Posterior vena cava (tissue), 2 donors: ENCODE measurements at regions of chr15 and their contacts with region 1.

Region 1: GRCh38 chr15:90648137-90649070 is 68.7 kb upstream of the BLM start:
- DNase-seq: peak; percentile 94

Region 2: GRCh38 chr15:90686435-90687218 is 38.2 kb after region 1 on chr15:
- intact Hi-C with region 1: loop called in 1 of 2 experiments (anchors 5 kb)
- DNase-seq: no peak

Region 3: GRCh38 chr15:90879408-90880366 is 231.3 kb after region 1 on chr15:
- intact Hi-C with region 1: loop called (anchors 2 to 10 kb)
- DNase-seq: no peak

Region 4: GRCh38 chr15:90886041-90886614 is 237.7 kb after region 1 on chr15:
- intact Hi-C with region 1: loop called (anchors 2 to 10 kb)
- DNase-seq: peak; percentile 94